ENCODE measurements at regions of chr20 and their contacts with region 1.

Region 1: GRCh38 chr20:9978397-9979004 is 56.3 kb upstream of the ANKEF1 start:
- DNase-seq: peak; percentile 88
- H3K4me3 Mint-ChIP-seq: no peak overlapping the region
- H3K27ac Mint-ChIP-seq: no peak overlapping the region
- H3K4me1 Mint-ChIP-seq: peaks cover 10% of the 10 kb centered on the region
- H3K27me3 Mint-ChIP-seq: no peaks in the 10 kb centered on the region
- CTCF ChIP-seq: peak; percentile 87

Region 2: DNA sequence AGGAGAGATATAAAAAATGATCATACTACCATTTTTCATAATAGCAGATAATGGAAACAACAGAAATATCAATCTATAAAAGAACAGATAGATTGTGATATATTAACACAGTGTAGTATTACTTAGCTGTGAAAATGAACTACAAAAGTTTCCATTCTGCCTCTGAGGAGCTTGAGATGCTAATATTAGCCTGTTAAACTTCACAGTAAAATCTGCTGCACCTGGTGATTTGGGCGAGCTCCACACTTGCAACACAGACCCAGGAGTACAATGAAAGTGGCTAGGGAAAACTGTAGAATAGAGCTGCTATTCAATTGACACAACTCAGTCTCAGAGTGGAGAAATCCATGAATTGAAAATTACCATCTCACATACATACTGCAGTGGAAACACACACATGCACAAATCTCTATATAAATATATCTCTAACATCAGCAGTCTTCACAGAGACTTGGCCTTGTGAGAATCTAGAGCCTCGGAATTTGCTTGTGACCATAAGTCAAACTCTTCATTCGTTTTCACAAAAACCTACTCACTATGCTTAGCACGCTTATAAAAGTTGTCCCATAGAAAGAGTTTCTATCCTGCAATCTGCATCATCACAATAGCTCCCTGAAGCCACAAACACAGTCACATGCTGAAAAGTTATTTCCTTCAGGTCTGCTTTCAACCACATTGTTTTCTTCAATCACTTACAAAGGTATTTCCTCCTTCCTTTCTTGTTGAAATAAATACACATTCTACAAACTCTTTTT is 272.6 kb before region 1 on chr20:
- CTCF ChIA-PET with region 1: no interaction called
- POLR2A ChIA-PET with region 1: no interaction called
- intact Hi-C with region 1: no loop called
- DNase-seq: no peak
- H3K4me3 Mint-ChIP-seq: no peak overlapping the region
- H3K27ac Mint-ChIP-seq: no peak overlapping the region
- H3K4me1 Mint-ChIP-seq: no peaks in the 10 kb centered on the region
- H3K27me3 Mint-ChIP-seq: no peaks in the 10 kb centered on the region
- CTCF ChIP-seq: no peak

Region 3: DNA sequence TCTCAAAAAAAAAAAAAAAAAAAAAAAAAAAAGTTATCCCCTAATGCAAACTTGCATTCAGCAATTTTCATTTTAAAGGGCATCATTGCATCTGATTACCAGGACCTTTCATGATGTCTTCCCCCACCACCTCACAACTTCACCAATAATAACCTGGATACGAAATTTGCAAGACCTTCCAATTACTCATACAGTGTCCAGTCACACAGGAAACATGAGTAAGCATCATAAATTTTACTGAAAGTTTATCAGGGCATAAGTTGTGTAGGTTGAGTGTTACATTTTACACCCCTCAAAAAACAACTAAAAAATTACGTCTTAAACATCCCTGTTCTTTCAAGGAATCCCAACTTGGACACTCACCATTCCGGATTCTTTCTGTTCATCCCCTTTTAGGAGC is 22.9 kb before region 1 on chr20:
- CTCF ChIA-PET with region 1: interaction called, 18 read pairs
- POLR2A ChIA-PET with region 1: no interaction called
- intact Hi-C with region 1: no loop called
- DNase-seq: peak; percentile 62
- H3K4me3 Mint-ChIP-seq: no peak overlapping the region
- H3K27ac Mint-ChIP-seq: no peak overlapping the region
- H3K4me1 Mint-ChIP-seq: peaks cover 13% of the 10 kb centered on the region
- H3K27me3 Mint-ChIP-seq: no peaks in the 10 kb centered on the region
- CTCF ChIP-seq: no peak

Region 4: DNA sequence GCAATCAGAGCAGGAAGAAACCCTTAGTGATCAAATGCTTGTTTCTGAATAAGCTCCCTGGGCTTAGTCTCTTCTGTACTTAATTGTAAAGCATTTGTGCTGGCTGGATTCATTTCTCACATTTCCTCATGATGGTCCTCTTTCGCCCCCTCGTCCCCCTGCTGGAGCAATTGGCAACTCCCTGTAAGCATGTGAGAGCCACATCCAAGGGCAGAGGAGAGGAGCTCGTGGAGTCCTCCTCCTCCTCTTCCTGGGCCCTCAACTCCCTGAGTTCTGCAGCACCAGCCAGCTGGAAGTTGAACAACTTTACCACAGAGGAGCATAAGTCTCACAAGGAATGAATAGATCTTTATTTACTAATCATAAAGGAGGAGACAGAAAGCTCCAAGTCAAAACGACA is 68.9 kb after region 1 on chr20:
- CTCF ChIA-PET with region 1: interaction called, 12 read pairs
- POLR2A ChIA-PET with region 1: no interaction called
- intact Hi-C with region 1: no loop called
- DNase-seq: peak; percentile 18
- H3K4me3 Mint-ChIP-seq: no peak overlapping the region
- H3K27ac Mint-ChIP-seq: no peak overlapping the region
- H3K4me1 Mint-ChIP-seq: no peaks in the 10 kb centered on the region
- H3K27me3 Mint-ChIP-seq: no peaks in the 10 kb centered on the region
- CTCF ChIP-seq: no peak

Region 5: GRCh38 chr20:10105046-10105445 is 126.5 kb after region 1 on chr20:
- CTCF ChIA-PET with region 1: interaction called, 14 read pairs
- POLR2A ChIA-PET with region 1: no interaction called
- intact Hi-C with region 1: no loop called
- DNase-seq: no peak
- H3K4me3 Mint-ChIP-seq: no peak overlapping the region
- H3K27ac Mint-ChIP-seq: no peak overlapping the region
- H3K4me1 Mint-ChIP-seq: no peaks in the 10 kb centered on the region
- H3K27me3 Mint-ChIP-seq: no peaks in the 10 kb centered on the region
- CTCF ChIP-seq: no peak

Region 6: GRCh38 chr20:10427060-10427692 is 448.7 kb after region 1 on chr20:
- CTCF ChIA-PET with region 1: interaction called, 345 read pairs
- POLR2A ChIA-PET with region 1: interaction called, 9 read pairs
- intact Hi-C with region 1: loop called (anchors 1 kb)
- DNase-seq: peak; percentile 72
- H3K4me3 Mint-ChIP-seq: no peak overlapping the region
- H3K27ac Mint-ChIP-seq: peak overlapping the region; percentile 74
- H3K4me1 Mint-ChIP-seq: peaks cover 34% of the 10 kb centered on the region
- H3K27me3 Mint-ChIP-seq: no peaks in the 10 kb centered on the region
- CTCF ChIP-seq: peak; percentile 72

Region 7: GRCh38 chr20:11274141-11274594 is 1295.7 kb after region 1 on chr20:
- CTCF ChIA-PET with region 1: interaction called, 3 read pairs
- POLR2A ChIA-PET with region 1: no interaction called
- intact Hi-C with region 1: loop called (anchors 10 kb)
- DNase-seq: peak; percentile 78
- H3K4me3 Mint-ChIP-seq: no peak overlapping the region
- H3K27ac Mint-ChIP-seq: peak overlapping the region; percentile 29
- H3K4me1 Mint-ChIP-seq: peaks cover 6% of the 10 kb centered on the region
- H3K27me3 Mint-ChIP-seq: no peaks in the 10 kb centered on the region
- CTCF ChIP-seq: peak; percentile 59